Left ventricle myocardium inferior (tissue), 1 donor: ENCODE measurements at regions of chr10 and their contacts with region 1.

Region 1: DNA sequence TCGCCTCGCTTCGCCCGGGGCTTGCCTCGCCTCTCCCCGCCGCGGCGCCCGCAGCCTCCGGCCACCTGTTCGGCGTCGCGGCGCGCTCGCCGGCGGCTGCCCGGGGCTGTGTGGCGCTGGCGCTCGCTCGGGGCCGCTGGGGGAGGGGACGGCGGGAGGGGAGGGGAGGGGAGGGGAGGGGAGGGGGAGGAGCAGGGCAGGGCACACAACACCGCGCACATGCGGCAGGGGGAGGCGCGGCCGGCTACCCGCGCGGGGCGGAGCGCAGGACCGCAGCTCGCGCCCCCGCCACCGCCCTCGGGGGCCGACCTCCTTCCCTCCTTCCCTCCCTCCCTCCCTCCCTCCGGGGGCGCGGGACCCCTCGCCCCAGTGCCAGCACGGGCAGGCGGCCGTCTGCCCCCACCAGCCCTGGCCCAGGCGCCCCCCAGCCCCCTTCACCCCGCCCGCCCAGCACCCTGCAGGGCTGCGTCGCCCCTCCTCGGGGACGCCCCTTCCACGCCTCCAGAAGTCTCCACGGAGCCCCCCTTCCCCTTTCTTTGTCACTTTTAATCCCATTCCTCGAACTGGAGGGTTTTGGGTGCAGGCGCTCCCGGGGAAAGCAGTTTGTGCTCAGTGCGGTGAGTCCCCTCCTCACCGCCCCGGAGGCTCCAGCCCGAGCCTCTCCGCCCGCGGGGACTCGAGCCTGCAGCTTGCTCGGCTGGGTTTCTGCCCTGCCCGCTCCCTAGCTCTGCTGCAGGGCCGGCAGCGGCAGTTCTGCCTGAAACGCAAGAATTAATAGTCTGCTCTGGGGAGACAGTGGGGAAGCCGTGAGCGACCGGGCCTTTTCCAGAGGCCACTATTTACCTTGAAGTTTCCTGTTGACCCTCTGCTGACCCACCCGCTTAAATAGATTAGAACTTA is at the start of gene PARD3:
- DNase-seq: peak; percentile 71
- H3K4me3 ChIP-seq: peak within 1 kb of the TSS; percentile 95
- H3K27ac ChIP-seq: peak within 1 kb of the TSS; percentile 89
- H3K4me1 ChIP-seq: peaks cover 63% of the 10 kb centered on the region
- H3K27me3 ChIP-seq: no peaks in the 10 kb centered on the region
- CTCF ChIP-seq: no peak
- total RNA-seq, gene PARD3: 29.6 TPM

Region 2: GRCh38 chr10:34710391-34710751 is 105.1 kb before region 1 on chr10:
- intact Hi-C with region 1: no loop called
- DNase-seq: no peak
- H3K4me3 ChIP-seq: no peak overlapping the region
- H3K27ac ChIP-seq: peak overlapping the region; percentile 76
- H3K4me1 ChIP-seq: peaks cover 85% of the 10 kb centered on the region
- H3K27me3 ChIP-seq: no peaks in the 10 kb centered on the region
- CTCF ChIP-seq: no peak

Region 3: GRCh38 chr10:34723750-34724149 is 91.7 kb before region 1 on chr10:
- intact Hi-C with region 1: loop called (anchors 10 kb)
- DNase-seq: no peak
- H3K4me3 ChIP-seq: peak overlapping the region; percentile 19
- H3K27ac ChIP-seq: peak overlapping the region; percentile 18
- H3K4me1 ChIP-seq: peaks cover 68% of the 10 kb centered on the region
- H3K27me3 ChIP-seq: no peaks in the 10 kb centered on the region
- CTCF ChIP-seq: peak; percentile 64